ENCODE measurements at regions of chr3 and their contacts with region 1.

Region 1: GRCh38 chr3:168040607-168041208 is 55.0 kb downstream of the GOLIM4 start:
- DNase-seq: no peak
- H3K4me3 Mint-ChIP-seq: no peak overlapping the region
- H3K27ac Mint-ChIP-seq: no peak overlapping the region
- H3K4me1 Mint-ChIP-seq: no peaks in the 10 kb centered on the region
- H3K27me3 Mint-ChIP-seq: peaks cover 7% of the 10 kb centered on the region

Region 2: GRCh38 chr3:167837466-167837865 is 203.2 kb before region 1 on chr3:
- CTCF ChIA-PET with region 1: interaction called, 3 read pairs
- intact Hi-C with region 1: loop called (anchors 5 kb)
- DNase-seq: no peak
- H3K4me3 Mint-ChIP-seq: no peak overlapping the region
- H3K27ac Mint-ChIP-seq: no peak overlapping the region
- H3K4me1 Mint-ChIP-seq: peaks cover 7% of the 10 kb centered on the region
- H3K27me3 Mint-ChIP-seq: peaks cover 7% of the 10 kb centered on the region

Region 3: DNA sequence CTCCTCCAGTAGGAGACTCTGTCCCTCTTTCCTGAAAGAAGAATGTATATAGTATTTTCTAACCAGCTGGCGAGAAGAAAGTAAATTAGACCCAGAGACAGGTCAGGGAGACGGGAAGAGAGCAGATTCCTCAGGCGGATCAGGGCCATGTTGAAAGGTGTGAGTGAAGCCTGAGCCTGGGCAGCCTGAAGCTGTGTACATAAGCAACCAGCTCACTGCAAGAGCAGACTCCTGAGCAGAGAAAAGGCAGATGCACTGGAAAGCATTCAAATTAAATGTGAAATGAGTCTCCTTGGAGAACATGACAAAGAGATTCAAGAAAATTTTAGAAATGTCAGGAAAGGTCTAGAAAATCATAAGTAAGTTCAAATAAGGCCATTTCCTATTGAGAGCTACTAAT is 110.7 kb before region 1 on chr3:
- CTCF ChIA-PET with region 1: interaction called, 3 read pairs
- intact Hi-C with region 1: loop called (anchors 1 kb)
- DNase-seq: no peak
- H3K4me3 Mint-ChIP-seq: no peak overlapping the region
- H3K27ac Mint-ChIP-seq: no peak overlapping the region
- H3K4me1 Mint-ChIP-seq: no peaks in the 10 kb centered on the region
- H3K27me3 Mint-ChIP-seq: peaks cover 3% of the 10 kb centered on the region

Region 4: GRCh38 chr3:168285506-168285905 is 244.8 kb after region 1 on chr3:
- CTCF ChIA-PET with region 1: no interaction called
- intact Hi-C with region 1: no loop called
- DNase-seq: no peak
- H3K4me3 Mint-ChIP-seq: no peak overlapping the region
- H3K27ac Mint-ChIP-seq: no peak overlapping the region
- H3K4me1 Mint-ChIP-seq: no peaks in the 10 kb centered on the region
- H3K27me3 Mint-ChIP-seq: no peaks in the 10 kb centered on the region

Measured in activated naive CD4-positive, alpha-beta T cell treated with anti-CD3 and anti-CD28 coated beads for 36 hours (primary cell).